Mammary epithelial cell (primary cell): ENCODE measurements at regions of chr4 and their contacts with region 1.

Region 1: GRCh38 chr4:99405433-99406115 is 29.6 kb downstream of the ADH7 start:
- DNase-seq: peak; percentile 66
- H3K4me3 ChIP-seq: no peak overlapping the region
- H3K27ac ChIP-seq: peak overlapping the region; percentile 88
- H3K4me1 ChIP-seq: peaks cover 17% of the 10 kb centered on the region
- H3K27me3 ChIP-seq: no peaks in the 10 kb centered on the region
- CTCF ChIP-seq: peak; percentile 92 to 94

Region 2: DNA sequence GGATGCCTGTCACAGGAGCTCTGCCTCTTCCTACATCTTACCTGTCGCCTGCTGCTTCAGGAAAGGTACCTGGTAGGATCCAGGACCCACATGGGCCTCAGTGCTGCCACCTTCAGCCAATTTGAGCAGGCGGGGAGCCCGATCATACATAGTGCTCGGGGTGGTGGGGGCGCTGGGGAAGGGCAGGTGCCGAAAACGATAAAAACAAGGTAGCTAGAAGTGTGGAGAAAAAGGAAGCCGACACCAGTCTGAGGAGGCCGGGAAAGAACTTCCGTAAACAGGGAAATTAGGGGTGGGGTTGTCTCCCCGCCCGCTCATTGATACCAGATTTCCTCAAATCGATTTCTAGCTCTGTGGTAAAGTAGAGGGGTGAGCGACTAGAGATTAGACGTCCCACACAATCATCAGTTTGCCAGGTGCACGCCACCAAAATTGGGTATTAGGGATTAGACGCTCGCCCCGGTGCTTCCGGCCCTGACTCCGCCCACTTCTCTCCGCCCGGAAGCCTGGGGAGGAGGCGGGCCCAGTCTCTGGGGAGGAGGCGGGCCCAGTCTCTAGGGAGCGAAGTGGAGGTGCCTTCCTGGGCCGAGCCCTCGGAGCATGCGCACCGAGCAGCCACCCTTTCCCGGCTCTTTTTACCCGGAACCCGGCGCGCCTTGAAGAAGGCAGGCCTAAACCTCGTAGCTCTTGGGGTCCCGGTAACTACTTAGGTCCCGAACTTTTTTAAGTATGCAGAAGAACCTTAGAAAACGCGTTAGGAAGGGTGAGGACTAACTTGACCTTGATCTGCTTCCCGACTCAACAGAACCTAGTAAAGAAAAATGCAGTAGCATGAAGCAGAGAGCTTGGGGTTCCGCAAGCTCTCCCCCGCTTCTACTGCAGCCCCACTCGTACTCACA is 1262.3 kb before region 1 on chr4 and contains the start of gene STPG2:
- CTCF ChIA-PET with region 1: interaction called, 3 read pairs
- dilution Hi-C with region 1: no loop called
- in situ Hi-C with region 1: no loop called
- intact Hi-C with region 1: loop called (anchors 10 kb)
- DNase-seq: peak; percentile 93
- H3K4me3 ChIP-seq: peak within 1 kb of the TSS; percentile 64 to 76 (median 69)
- H3K27ac ChIP-seq: peak within 1 kb of the TSS; percentile 78
- H3K4me1 ChIP-seq: peaks cover 12% of the 10 kb centered on the region
- H3K27me3 ChIP-seq: no peaks in the 10 kb centered on the region
- CTCF ChIP-seq: peak; percentile 53 to 73
- total RNA-seq, gene STPG2: 0.17 to 0.28 TPM

Region 3: GRCh38 chr4:98928505-98929340 is 476.9 kb before region 1 on chr4 and contains the start of gene EIF4E:
- CTCF ChIA-PET with region 1: no interaction called
- dilution Hi-C with region 1: no loop called
- in situ Hi-C with region 1: no loop called
- intact Hi-C with region 1: loop called (anchors 10 kb)
- DNase-seq: peak; percentile 99
- H3K4me3 ChIP-seq: peak within 1 kb of the TSS; percentile 96 to 99 (median 99)
- H3K27ac ChIP-seq: peak within 1 kb of the TSS; percentile 99
- H3K4me1 ChIP-seq: peaks cover 7% of the 10 kb centered on the region
- H3K27me3 ChIP-seq: no peaks in the 10 kb centered on the region
- CTCF ChIP-seq: peak; percentile 2 to 22
- total RNA-seq, gene EIF4E: 104 to 113 TPM

Region 4: GRCh38 chr4:99088481-99089365 is 316.9 kb before region 1 on chr4 and contains the start of gene ADH5:
- CTCF ChIA-PET with region 1: no interaction called
- dilution Hi-C with region 1: no loop called
- in situ Hi-C with region 1: no loop called
- intact Hi-C with region 1: loop called (anchors 1 kb)
- DNase-seq: peak; percentile 80
- H3K4me3 ChIP-seq: peak within 1 kb of the TSS; percentile 65 to 97 (median 84)
- H3K27ac ChIP-seq: peak within 1 kb of the TSS; percentile 94
- H3K4me1 ChIP-seq: peaks cover 22% of the 10 kb centered on the region
- H3K27me3 ChIP-seq: no peaks in the 10 kb centered on the region
- CTCF ChIP-seq: no peak
- total RNA-seq, gene ADH5: 192 to 237 TPM

Region 5: DNA sequence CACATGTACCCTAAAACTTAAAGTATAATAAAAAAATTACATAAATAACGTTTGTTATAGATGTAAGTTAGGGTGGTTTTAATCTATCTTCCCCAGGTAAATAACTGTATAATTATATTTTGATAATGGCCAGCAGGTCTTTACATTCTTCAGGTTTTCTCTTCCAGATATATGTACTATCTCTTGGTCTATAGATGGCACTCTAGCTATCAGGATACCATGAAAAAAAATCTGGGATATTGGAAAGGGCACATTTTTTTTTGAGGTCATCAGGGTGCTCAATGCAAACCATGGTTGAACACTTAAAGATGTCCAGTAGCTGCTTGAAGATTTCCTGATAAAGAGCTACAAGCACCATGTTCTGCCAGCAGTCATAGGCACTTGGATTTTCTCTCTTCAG is 245.9 kb before region 1 on chr4:
- CTCF ChIA-PET with region 1: no interaction called
- dilution Hi-C with region 1: no loop called
- in situ Hi-C with region 1: no loop called
- intact Hi-C with region 1: loop called (anchors 1 kb)
- DNase-seq: no peak
- H3K4me3 ChIP-seq: no peak overlapping the region
- H3K27ac ChIP-seq: no peak overlapping the region
- H3K4me1 ChIP-seq: no peaks in the 10 kb centered on the region
- H3K27me3 ChIP-seq: no peaks in the 10 kb centered on the region
- CTCF ChIP-seq: peak; percentile 21 to 34

Region 6: DNA sequence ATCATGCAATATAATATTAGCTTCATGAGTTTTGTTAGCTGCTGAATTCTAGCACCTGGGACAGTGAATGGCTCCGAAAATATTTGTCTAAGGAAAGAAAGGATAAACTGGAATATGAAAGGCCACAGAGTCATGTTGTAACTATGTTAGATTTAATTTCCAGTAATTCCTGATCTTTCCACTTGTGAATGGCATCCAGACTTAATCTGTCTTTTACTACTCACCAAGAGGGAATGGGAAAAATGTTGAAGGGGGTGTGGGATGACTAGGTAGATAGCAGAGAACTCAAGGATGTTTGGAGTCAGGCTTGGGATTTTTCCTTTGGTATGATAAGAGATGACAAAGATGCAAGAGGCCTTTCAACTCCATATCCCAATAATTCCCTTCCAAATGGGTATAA is 195.9 kb before region 1 on chr4:
- CTCF ChIA-PET with region 1: no interaction called
- dilution Hi-C with region 1: no loop called
- in situ Hi-C with region 1: no loop called
- intact Hi-C with region 1: no loop called
- DNase-seq: no peak
- H3K4me3 ChIP-seq: no peak overlapping the region
- H3K27ac ChIP-seq: no peak overlapping the region
- H3K4me1 ChIP-seq: no peaks in the 10 kb centered on the region
- H3K27me3 ChIP-seq: no peaks in the 10 kb centered on the region
- CTCF ChIP-seq: no peak

Region 7: DNA sequence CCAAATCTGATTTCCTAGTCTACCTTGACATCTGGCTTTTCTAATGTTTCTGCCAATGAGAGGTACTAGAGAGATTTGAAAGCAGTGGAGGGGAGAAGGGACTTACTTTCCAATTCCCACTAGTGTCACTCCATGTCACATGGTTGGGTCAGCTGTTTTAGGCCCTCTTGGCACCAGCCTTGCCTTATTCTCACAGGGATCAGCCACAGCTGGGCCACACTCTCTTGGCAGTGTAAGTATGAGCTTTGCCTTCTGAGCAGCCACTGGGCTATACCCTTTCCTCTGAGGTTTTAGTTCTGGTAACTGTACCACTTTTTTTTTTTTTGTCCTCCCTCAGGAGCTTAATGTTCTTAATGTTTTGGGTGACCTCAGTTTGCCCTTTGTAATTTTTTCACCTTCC is 42.8 kb before region 1 on chr4:
- CTCF ChIA-PET with region 1: no interaction called
- dilution Hi-C with region 1: no loop called
- in situ Hi-C with region 1: no loop called
- intact Hi-C with region 1: no loop called
- DNase-seq: no peak
- H3K4me3 ChIP-seq: no peak overlapping the region
- H3K27ac ChIP-seq: no peak overlapping the region
- H3K4me1 ChIP-seq: no peaks in the 10 kb centered on the region
- H3K27me3 ChIP-seq: no peaks in the 10 kb centered on the region
- CTCF ChIP-seq: no peak

Region 8: DNA sequence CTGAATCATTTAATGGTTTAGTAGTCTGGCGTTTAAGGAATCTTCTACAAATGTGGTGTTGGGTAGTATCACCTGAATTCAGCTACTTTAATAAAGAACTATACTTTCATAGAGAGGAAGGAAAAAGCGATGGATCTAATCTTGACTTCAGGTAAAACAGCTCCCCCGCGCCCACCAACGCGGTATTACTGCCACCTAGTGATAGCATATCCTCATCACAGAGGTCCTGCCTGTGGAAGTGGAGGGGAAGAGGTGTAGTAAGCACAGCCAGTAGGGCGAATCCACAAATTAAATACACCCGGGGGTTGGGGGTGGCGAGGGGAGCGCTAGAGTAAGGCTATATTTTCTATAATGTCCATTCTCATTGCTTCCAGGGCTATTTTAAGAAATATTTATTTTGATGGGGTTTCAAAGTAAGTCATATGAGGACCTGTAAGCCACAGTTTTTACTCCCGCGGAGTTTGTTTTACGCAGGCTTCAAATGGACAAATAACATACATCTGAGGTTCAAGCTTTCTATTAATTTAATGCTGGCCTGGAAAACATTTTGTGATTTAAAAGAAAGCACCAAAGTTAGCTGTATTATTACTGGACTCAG is 402.8 kb after region 1 on chr4:
- CTCF ChIA-PET with region 1: no interaction called
- dilution Hi-C with region 1: no loop called
- in situ Hi-C with region 1: no loop called
- intact Hi-C with region 1: loop called (anchors 5 kb)
- DNase-seq: peak; percentile 58
- H3K4me3 ChIP-seq: no peak overlapping the region
- H3K27ac ChIP-seq: no peak overlapping the region
- H3K4me1 ChIP-seq: no peaks in the 10 kb centered on the region
- H3K27me3 ChIP-seq: peaks cover 3% of the 10 kb centered on the region
- CTCF ChIP-seq: peak; percentile 81 to 90